CD8-positive, alpha-beta T cell (primary cell): ENCODE measurements at regions of chr7 and their contacts with region 1.

Region 1: DNA sequence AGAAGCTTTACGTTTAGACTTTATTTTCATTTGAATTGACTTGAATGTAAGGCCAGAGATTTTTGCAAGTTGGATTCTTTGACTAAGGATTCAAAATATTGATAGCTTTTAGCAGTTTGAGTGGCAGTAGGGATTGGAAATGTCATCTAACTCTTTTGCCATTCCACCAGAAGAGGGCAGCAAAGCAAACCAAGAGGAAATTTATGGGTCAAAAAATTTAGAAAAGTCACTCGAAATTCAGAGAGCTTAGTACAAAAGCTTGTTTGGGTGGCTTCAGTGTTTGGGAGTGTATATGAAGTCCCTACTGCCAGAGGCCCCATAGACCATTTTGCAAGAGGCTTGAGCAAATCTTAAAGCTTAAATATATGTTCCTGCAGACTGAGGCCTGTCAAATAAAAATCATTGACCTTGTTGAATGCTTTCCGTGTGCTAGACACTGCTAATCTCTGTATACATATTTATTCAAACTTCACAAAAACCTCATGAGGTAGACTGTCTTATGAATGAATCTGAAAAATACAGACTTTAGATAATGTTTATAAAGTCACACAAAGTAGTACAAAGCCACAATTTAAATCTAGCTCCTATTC is 44.6 kb upstream of the RSBN1L start:
- DNase-seq: peak in 5 of 9 experiments; percentile 13 to 62 (median 37)
- ATAC-seq: peak; percentile 44
- H3K4me3 ChIP-seq: no peak overlapping the region
- H3K4me3 Mint-ChIP-seq: no peak overlapping the region
- H3K27ac ChIP-seq: no peak overlapping the region
- H3K27ac Mint-ChIP-seq: no peak overlapping the region
- H3K4me1 ChIP-seq: no peaks in the 10 kb centered on the region
- H3K4me1 Mint-ChIP-seq: no peaks in the 10 kb centered on the region
- H3K27me3 ChIP-seq: no peaks in the 10 kb centered on the region
- H3K27me3 Mint-ChIP-seq: no peaks in the 10 kb centered on the region
- CTCF ChIP-seq: peak; percentile 78

Region 2: DNA sequence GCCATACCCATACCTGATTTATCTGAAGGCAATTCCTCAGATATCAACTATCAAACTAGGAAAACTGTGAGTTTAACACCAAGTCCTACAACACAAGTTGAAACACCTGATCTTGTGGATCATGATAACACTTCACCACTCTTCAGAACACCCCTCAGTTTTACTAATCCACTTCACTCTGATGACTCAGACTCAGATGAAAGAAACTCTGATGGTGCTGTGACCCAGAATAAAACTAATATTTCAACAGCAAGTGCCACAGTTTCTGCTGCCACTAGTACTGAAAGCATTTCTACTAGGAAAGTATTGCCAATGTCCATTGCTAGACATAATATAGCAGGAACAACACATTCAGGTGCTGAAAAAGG is 24.4 kb before region 1 on chr7:
- CTCF ChIA-PET with region 1: interaction called, 11 read pairs
- POLR2A ChIA-PET with region 1: no interaction called
- intact Hi-C with region 1: no loop called
- DNase-seq: no peak
- ATAC-seq: no peak
- H3K4me3 ChIP-seq: no peak overlapping the region
- H3K4me3 Mint-ChIP-seq: no peak overlapping the region
- H3K27ac ChIP-seq: no peak overlapping the region
- H3K27ac Mint-ChIP-seq: no peak overlapping the region
- H3K4me1 ChIP-seq: no peaks in the 10 kb centered on the region
- H3K4me1 Mint-ChIP-seq: no peaks in the 10 kb centered on the region
- H3K27me3 ChIP-seq: no peaks in the 10 kb centered on the region
- H3K27me3 Mint-ChIP-seq: no peaks in the 10 kb centered on the region
- CTCF ChIP-seq: no peak

Region 3: DNA sequence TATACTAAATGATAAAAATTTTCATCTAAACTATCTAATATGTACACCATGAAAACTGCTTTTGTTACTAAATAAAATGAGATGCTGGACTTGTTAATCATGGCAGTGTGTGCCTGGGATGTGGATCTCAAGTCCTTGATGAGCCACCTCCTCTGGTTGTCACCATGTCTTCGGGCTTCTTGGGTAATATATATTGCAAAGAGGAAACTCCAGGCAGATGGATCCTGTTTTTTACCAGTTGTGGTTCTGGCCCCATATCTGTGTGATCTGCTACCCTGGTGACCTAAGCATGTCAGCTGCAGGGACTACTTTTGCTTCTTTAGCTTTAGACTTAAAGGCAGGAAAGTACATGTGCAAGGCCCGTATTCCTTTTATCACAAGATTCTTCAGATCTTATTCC is 100.4 kb after region 1 on chr7:
- CTCF ChIA-PET with region 1: interaction called, 75 read pairs
- POLR2A ChIA-PET with region 1: no interaction called
- intact Hi-C with region 1: no loop called
- DNase-seq: peak in 1 of 9 experiments; percentile 14
- ATAC-seq: no peak
- H3K4me3 ChIP-seq: no peak overlapping the region
- H3K4me3 Mint-ChIP-seq: peak overlapping the region; percentile 1
- H3K27ac ChIP-seq: no peak overlapping the region
- H3K27ac Mint-ChIP-seq: peak overlapping the region; percentile 81
- H3K4me1 ChIP-seq: peaks cover 23% of the 10 kb centered on the region
- H3K4me1 Mint-ChIP-seq: peaks cover 66% of the 10 kb centered on the region
- H3K27me3 ChIP-seq: no peaks in the 10 kb centered on the region
- H3K27me3 Mint-ChIP-seq: no peaks in the 10 kb centered on the region
- CTCF ChIP-seq: no peak